ENCODE measurements at regions of chr9 and their contacts with region 1.

Region 1: DNA sequence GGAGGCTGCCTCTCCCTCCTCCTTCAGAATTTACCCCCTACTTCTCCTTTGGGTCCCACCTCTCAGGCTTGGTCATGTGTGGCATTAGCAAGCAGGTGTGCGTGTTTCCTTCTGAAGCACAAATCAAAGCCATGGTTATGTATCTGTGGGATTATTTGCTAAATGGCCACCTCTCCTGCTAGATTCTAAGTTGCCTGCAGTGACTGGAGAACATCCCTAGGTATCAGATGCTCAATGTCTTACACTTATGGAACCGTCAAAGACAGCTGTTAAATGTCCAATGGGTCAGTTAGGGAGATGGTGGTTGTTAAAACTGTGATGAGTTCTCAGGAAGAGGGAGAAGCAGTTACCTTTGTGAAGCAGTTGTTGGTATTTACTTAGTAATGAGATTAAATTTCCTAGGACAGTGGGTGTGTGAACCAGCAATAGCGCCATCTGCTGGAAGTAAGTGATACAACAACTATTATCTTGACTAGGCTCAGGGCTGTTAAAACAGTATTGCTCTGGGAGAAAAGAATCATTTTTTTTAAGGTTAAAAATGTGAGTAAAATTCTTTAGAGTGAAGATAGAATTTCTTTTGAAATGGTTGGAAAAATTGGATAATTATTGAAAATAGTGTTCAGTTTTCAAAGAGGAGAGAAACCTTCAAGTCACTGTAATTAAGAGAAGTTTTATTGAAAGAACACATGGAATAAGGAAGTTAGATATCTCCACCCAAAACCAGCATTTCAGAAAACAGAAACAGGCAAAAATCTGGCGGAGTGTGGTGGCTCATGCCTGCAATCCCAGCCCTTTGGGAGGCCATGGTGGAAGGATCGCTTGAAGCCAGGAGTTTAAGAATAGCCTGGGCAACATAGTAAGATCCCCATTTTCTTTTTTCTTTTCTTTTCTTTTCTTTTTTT is 71.3 kb downstream of the TMC1 start:
- DNase-seq: no peak
- ATAC-seq: peak; percentile 68
- H3K4me3 Mint-ChIP-seq: no peak overlapping the region
- H3K27ac Mint-ChIP-seq: no peak overlapping the region
- H3K4me1 Mint-ChIP-seq: peaks cover 4% of the 10 kb centered on the region
- H3K27me3 Mint-ChIP-seq: peaks cover 2% of the 10 kb centered on the region
- CTCF ChIP-seq: peak; percentile 41

Region 2: DNA sequence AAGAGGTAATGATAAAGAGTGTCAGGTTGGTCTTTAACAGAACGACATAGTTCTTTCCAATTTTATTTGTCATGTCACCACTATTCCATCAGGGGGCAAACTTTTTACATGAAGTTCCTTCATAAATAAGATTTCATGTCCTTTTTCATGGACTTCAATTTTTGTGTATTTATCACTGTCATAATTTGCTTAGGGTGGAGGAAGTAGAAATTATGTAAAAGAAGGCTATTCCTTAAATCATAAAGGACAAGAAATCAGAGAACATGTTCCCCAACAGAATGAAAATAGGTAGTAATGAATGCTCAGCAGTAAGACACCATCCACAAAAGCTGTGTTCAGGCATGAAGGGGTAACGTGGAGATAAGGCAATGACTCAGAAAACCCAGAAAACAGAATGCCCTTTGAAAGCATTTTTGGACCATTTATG is 300.5 kb before region 1 on chr9:
- CTCF ChIA-PET with region 1: interaction called, 13 read pairs
- POLR2A ChIA-PET with region 1: interaction called, 3 read pairs
- intact Hi-C with region 1: loop called (anchors 1 kb)
- DNase-seq: no peak
- ATAC-seq: peak; percentile 52
- H3K4me3 Mint-ChIP-seq: no peak overlapping the region
- H3K27ac Mint-ChIP-seq: no peak overlapping the region
- H3K4me1 Mint-ChIP-seq: peaks cover 17% of the 10 kb centered on the region
- H3K27me3 Mint-ChIP-seq: no peaks in the 10 kb centered on the region
- CTCF ChIP-seq: no peak

Region 3: DNA sequence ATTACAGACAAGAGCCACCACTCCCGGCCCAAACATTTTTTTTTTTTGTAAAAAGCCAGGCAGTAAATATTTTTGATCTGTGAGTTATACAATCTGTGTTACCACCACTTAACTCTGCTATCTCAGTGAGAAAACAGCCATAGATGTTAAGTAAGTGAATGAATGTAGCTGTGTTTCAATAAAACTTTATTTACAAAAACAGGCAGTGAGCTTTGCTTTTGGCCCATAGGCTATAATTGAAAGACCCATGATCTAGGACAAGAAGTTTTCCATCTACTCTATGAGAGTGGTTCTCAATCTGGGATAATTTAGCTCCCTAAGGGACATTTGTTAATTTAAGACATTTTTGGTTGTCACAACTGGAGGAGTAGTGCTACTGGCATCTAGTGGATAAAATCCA is 19.7 kb after region 1 on chr9:
- CTCF ChIA-PET with region 1: no interaction called
- POLR2A ChIA-PET with region 1: no interaction called
- intact Hi-C with region 1: no loop called
- DNase-seq: no peak
- ATAC-seq: no peak
- H3K4me3 Mint-ChIP-seq: no peak overlapping the region
- H3K27ac Mint-ChIP-seq: no peak overlapping the region
- H3K4me1 Mint-ChIP-seq: no peaks in the 10 kb centered on the region
- H3K27me3 Mint-ChIP-seq: no peaks in the 10 kb centered on the region
- CTCF ChIP-seq: no peak

Region 4: GRCh38 chr9:72635197-72635596 is 42.4 kb after region 1 on chr9:
- CTCF ChIA-PET with region 1: no interaction called
- POLR2A ChIA-PET with region 1: no interaction called
- intact Hi-C with region 1: no loop called
- DNase-seq: no peak
- ATAC-seq: no peak
- H3K4me3 Mint-ChIP-seq: no peak overlapping the region
- H3K27ac Mint-ChIP-seq: no peak overlapping the region
- H3K4me1 Mint-ChIP-seq: no peaks in the 10 kb centered on the region
- H3K27me3 Mint-ChIP-seq: peaks cover 4% of the 10 kb centered on the region
- CTCF ChIP-seq: no peak

Region 5: DNA sequence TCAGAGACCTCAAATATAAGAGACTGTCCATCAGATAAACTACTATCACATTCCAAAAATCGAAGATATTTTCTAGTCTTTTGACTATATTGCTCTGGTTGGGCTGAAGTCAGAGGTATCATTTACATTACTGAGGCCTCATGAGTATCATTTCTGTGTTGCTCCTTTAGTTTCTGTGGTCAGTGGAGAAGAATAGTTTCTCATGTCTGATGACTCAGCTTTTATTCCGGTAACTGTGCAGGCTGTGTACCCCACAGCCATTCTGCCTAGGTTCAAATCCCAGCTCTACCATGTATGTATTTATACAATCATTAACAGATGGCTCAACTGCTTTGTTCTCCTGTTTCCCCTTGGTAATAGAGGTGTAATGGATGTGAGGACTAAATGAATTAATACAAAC is 180.8 kb after region 1 on chr9:
- CTCF ChIA-PET with region 1: no interaction called
- POLR2A ChIA-PET with region 1: no interaction called
- intact Hi-C with region 1: no loop called
- DNase-seq: no peak
- ATAC-seq: no peak
- H3K4me3 Mint-ChIP-seq: no peak overlapping the region
- H3K27ac Mint-ChIP-seq: no peak overlapping the region
- H3K4me1 Mint-ChIP-seq: no peaks in the 10 kb centered on the region
- H3K27me3 Mint-ChIP-seq: no peaks in the 10 kb centered on the region
- CTCF ChIP-seq: no peak

Region 6: GRCh38 chr9:73023025-73023541 is 430.3 kb after region 1 on chr9:
- CTCF ChIA-PET with region 1: no interaction called
- POLR2A ChIA-PET with region 1: no interaction called
- intact Hi-C with region 1: loop called (anchors 10 kb)
- DNase-seq: no peak
- ATAC-seq: no peak
- H3K4me3 Mint-ChIP-seq: no peak overlapping the region
- H3K27ac Mint-ChIP-seq: no peak overlapping the region
- H3K4me1 Mint-ChIP-seq: peaks cover 42% of the 10 kb centered on the region
- H3K27me3 Mint-ChIP-seq: peaks cover 3% of the 10 kb centered on the region
- CTCF ChIP-seq: peak; percentile 39

Region 7: DNA sequence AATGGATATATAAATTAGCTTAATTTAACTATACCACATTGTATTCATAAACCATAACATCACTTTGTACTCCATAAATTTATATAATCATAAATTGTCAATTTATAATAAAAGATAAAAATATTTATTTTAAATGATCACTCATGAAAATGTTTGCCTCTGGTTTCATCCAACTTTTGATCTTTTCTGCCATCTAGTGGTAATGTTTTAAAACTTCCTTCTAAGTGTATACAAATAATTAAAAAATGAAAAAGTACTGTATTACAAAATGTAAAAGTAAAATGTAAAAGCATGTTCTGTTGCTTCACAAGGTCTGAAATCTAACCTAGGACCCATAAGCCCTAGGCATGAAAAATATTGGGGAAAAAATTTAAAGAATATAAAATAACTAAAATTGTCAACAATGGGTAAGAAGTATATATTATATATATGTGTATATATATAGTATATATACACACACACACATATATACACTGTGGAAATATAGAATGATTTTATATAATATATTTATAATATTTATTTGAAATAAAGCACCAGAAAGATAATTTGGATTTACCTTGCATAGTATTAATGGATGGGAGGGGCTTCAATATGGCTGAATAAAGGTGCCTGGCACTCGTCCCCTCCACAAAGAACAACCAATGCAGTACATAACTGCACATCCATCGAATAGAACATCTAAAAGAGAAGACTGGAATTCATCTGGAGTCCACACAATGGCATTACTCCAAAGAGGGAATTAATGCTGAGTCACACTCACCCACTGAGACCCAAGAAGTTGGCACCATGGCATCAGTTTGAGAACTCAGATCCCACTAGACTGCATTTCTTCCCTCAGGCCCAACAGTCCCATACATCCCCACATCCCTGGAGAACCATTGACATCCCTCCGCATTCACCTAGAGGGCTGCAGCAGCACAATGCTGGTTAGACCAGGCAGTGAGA is 591.4 kb after region 1 on chr9:
- CTCF ChIA-PET with region 1: no interaction called
- POLR2A ChIA-PET with region 1: no interaction called
- intact Hi-C with region 1: loop called (anchors 2 kb)
- DNase-seq: no peak
- ATAC-seq: no peak
- H3K4me3 Mint-ChIP-seq: no peak overlapping the region
- H3K27ac Mint-ChIP-seq: no peak overlapping the region
- H3K4me1 Mint-ChIP-seq: no peaks in the 10 kb centered on the region
- H3K27me3 Mint-ChIP-seq: peaks cover 3% of the 10 kb centered on the region
- CTCF ChIP-seq: no peak

Measured in activated B cell treated with CpG ODN at 0.5 μM for 24 hours (primary cell).